ENCODE measurements at regions of chr11 and their contacts with region 1.

Region 1: GRCh38 chr11:66386171-66387069 is 14.9 kb upstream of the SLC29A2 start:
- DNase-seq: peak; percentile 77 to 82 (median 79)
- ATAC-seq: peak; percentile 90 to 97 (median 92)
- H3K4me3 ChIP-seq: no peak overlapping the region
- H3K27ac ChIP-seq: no peak overlapping the region
- H3K4me1 ChIP-seq: no peaks in the 10 kb centered on the region
- H3K27me3 ChIP-seq: no peaks in the 10 kb centered on the region
- CTCF ChIP-seq: peak; percentile 81 to 96 (median 96)
- POLR2A ChIP-seq: no peak

Region 2: DNA sequence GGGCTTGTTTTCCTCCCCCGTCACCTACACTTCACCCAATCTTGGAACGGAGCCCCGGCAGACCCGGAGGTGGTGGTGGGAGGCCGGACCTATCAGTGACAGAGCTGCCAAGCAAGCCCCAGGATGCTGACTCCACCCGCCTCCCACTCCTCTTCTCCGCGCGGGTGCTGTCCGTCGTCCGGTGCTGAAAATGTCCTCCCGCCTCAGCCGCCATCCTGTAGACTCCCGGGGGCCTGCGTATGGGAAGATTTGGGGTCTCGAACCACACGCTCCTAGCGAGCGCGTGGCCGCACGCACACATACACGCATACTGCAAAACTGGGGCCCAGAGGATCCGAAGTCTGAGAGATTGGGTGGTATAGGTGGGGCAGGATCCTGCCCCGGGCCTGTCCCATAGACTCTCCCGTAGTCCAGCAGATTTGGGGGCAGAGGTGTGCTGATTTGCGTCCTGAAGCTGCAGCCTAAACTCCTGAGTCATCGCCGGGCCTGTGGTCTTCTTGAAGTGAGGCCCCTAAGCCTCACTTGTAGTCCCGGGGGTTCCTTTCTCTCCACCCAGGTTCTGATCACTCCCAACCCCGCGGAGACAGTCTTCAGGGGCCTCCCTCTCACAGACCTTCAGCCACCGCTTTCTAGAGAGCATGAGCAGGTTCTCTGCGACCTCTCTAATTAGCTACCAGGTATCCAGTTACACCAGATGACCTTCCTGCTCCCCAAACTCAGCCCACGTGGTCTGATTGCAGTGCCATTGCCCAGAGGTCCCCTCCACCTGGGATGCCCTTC is 96.7 kb before region 1 on chr11:
- intact Hi-C with region 1: loop called in 1 of 2 experiments (anchors 10 kb)
- DNase-seq: peak in 2 of 3 donors; percentile 71 to 81
- ATAC-seq: peak; percentile 39 to 55 (median 54)
- H3K4me3 ChIP-seq: peak overlapping the region; percentile 69 to 97 (median 75)
- H3K27ac ChIP-seq: peak overlapping the region; percentile 77 to 97 (median 91)
- H3K4me1 ChIP-seq: peaks cover 0 to 17% (median 7%) of the 10 kb centered on the region in 4 donors
- H3K27me3 ChIP-seq: no peaks in the 10 kb centered on the region
- CTCF ChIP-seq: no peak
- POLR2A ChIP-seq: no peak

Measured in right lobe of liver (tissue), 6 donors.